Mammary epithelial cell (primary cell): ENCODE measurements at regions of chr19 and their contacts with region 1.

Region 1: DNA sequence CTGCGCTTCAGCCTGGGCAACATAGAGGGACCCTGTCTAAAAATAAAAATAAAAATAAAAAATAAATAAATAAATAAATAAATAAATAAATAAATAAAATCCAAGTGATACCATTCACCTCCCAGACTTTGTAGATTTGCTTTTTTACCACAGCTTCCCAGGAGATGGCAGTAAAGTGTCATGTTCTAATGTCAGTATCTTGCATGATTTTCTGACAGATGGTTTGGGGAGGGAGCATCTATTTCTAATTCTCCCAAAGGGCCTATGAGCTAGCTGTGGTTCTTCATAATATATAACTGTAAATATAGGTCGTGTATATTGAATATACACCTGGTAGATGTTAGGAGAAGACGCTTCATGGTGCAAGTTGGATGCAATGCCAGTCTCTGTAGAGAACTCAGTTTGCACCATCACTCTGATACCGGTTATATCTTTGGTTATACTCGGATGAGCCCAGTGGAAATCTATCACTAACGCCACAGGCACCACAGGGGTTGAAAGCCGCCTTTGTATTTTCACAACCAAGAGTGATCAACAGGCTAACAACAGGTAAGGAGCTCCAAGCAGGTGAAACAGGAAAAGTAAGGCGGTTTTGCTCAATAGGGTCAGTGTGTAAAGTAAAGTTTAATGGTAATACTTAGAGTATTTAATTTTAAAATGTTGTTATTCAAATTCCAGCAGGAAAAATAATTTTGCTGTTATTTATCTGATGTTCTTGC is 13.9 kb downstream of the APLP1 start:
- DNase-seq: peak; percentile 66
- H3K4me3 ChIP-seq: no peak overlapping the region
- H3K27ac ChIP-seq: no peak overlapping the region
- H3K4me1 ChIP-seq: no peaks in the 10 kb centered on the region
- H3K27me3 ChIP-seq: no peaks in the 10 kb centered on the region
- CTCF ChIP-seq: peak; percentile 39 to 58

Region 2: GRCh38 chr19:35375505-35376307 is 506.6 kb before region 1 on chr19:
- CTCF ChIA-PET with region 1: no interaction called
- dilution Hi-C with region 1: no loop called
- in situ Hi-C with region 1: no loop called
- intact Hi-C with region 1: no loop called
- DNase-seq: no peak
- H3K4me3 ChIP-seq: no peak overlapping the region
- H3K27ac ChIP-seq: no peak overlapping the region
- H3K4me1 ChIP-seq: no peaks in the 10 kb centered on the region
- H3K27me3 ChIP-seq: no peaks in the 10 kb centered on the region
- CTCF ChIP-seq: no peak

Region 3: GRCh38 chr19:35757749-35758608 is 124.3 kb before region 1 on chr19 and contains the start of gene PROSER3:
- CTCF ChIA-PET with region 1: interaction called, 14 read pairs
- dilution Hi-C with region 1: no loop called
- in situ Hi-C with region 1: no loop called
- intact Hi-C with region 1: no loop called
- DNase-seq: peak; percentile 99
- H3K4me3 ChIP-seq: peak within 1 kb of the TSS; percentile 71 to 83 (median 76)
- H3K27ac ChIP-seq: peak within 1 kb of the TSS; percentile 91
- H3K4me1 ChIP-seq: peaks cover 19% of the 10 kb centered on the region
- H3K27me3 ChIP-seq: no peaks in the 10 kb centered on the region
- CTCF ChIP-seq: no peak
- total RNA-seq, gene PROSER3: 9.7 to 48.3 TPM

Region 4: GRCh38 chr19:35869327-35870123 is 12.7 kb before region 1 on chr19:
- CTCF ChIA-PET with region 1: no interaction called
- dilution Hi-C with region 1: no loop called
- in situ Hi-C with region 1: no loop called
- intact Hi-C with region 1: loop called (anchors 1 kb)
- DNase-seq: peak; percentile 60
- H3K4me3 ChIP-seq: peak overlapping the region in 1 of 3 experiments; percentile 13
- H3K27ac ChIP-seq: no peak overlapping the region
- H3K4me1 ChIP-seq: peaks cover 13% of the 10 kb centered on the region
- H3K27me3 ChIP-seq: no peaks in the 10 kb centered on the region
- CTCF ChIP-seq: no peak

Region 5: DNA sequence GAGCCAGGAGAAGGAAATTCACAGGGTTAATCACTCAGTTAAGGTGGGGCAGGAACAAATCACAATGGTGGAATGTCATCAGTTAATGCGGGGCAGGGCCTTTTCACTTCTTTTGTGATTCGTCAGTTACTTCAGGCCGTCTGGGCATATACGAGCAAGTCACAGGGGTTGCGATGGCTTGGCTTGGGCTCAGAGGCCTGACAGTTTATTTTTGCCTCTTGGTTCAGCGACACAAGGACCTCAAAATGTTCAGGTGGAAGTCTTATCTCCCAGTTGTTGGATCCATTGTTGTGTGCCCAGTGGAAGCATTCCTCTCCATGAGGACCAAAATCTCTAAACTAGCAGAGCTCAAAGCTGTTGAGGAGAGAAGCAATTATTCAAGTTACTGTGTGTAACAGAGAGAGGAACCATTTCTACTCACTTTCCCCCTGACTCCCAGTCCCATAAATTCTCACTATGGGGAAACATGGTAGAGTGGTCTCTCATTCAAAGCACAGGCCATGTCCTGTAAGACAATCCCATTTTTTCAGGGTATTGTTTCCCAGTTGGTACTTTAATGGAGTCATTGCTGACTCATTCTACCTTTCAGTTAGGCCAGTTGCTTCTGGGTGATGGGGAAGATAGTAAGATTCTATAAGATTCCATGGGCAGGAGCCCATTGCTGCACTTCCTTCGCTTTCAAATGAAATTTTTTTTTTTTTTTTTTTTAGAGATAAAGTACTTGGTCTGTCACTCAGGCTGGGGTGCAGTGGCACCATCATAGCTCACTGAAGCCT is 278.7 kb after region 1 on chr19:
- CTCF ChIA-PET with region 1: no interaction called
- dilution Hi-C with region 1: no loop called
- in situ Hi-C with region 1: no loop called
- intact Hi-C with region 1: no loop called
- DNase-seq: no peak
- H3K4me3 ChIP-seq: no peak overlapping the region
- H3K27ac ChIP-seq: no peak overlapping the region
- H3K4me1 ChIP-seq: no peaks in the 10 kb centered on the region
- H3K27me3 ChIP-seq: no peaks in the 10 kb centered on the region
- CTCF ChIP-seq: no peak